Right ventricle myocardium inferior (tissue), 1 donor: ENCODE measurements at regions of chr7 and their contacts with region 1.

Region 1: GRCh38 chr7:100081535-100082102 is at the start of gene ZNF3:
- DNase-seq: peak; percentile 98
- ATAC-seq: peak; percentile 97
- total RNA-seq, gene ZNF3: 14.6 TPM

Region 2: DNA sequence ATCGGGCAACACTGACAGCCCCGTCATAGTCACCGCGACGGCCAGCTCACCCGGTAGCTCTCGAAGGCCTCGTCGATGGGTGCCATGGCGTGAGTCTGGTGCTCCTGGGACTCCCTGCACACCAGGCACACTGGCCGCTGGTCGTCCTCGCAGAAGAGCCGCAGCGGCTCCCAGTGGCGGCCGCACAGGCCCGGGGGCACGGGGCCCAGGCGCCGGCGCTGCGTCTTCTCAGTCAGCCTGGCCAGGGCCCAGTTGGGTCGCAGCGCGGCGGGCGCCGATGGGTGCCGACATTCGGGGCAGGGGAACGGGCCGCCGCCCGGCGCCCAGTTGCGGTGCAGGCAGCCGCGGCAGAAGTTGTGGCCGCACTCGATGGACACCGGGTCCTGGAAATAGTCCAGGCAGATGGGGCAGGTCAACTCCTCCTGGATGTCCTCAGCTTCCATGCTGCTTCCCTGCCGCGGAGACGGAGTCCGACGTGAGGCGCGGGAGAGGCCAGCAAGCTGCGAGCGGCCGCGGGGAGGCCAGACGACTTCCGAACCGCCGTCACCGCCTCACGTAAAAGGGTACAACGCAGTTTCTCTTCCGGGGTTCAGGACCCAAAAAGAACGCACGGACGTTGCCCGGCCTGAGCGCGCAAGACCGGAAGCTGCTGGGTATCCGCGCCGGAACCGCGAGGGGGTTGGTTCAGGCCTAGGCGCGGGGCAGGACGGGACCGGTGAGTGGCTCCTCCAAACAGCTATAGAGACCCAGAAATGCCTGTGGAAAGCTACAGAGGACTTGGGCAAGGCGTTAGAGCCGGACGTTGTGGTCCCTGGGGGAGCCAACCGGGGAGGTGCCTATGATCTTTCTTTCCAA is 162.4 kb before region 1 on chr7 and contains the start of gene TRIM4:
- intact Hi-C with region 1: loop called (anchors 10 kb)
- DNase-seq: peak; percentile 96
- ATAC-seq: peak; percentile 100
- total RNA-seq, gene TRIM4: 6.2 TPM

Region 3: GRCh38 chr7:100101016-100101862 is 19.6 kb after region 1 on chr7 and contains the starts of genes AP4M1 and MCM7:
- intact Hi-C with region 1: loop called (anchors 1 kb)
- DNase-seq: peak; percentile 100
- ATAC-seq: peak; percentile 97
- total RNA-seq, gene AP4M1: 10.1 TPM
- total RNA-seq, gene MCM7: 25.4 TPM